PC-3 (cell line): ENCODE measurements at regions of chr3 and their contacts with region 1.

Region 1: GRCh38 chr3:32421991-32422859 is 30.6 kb downstream of the CMTM7 start:
- DNase-seq: peak; percentile 98
- ATAC-seq: peak; percentile 53
- H3K4me3 ChIP-seq: peak overlapping the region; percentile 53; the same call in 1 of the 2 replicates
- H3K27ac ChIP-seq: peak overlapping the region; percentile 99
- H3K4me1 ChIP-seq: peaks cover 62% of the 10 kb centered on the region
- H3K27me3 ChIP-seq: no peaks in the 10 kb centered on the region
- CTCF ChIP-seq: no peak

Region 2: DNA sequence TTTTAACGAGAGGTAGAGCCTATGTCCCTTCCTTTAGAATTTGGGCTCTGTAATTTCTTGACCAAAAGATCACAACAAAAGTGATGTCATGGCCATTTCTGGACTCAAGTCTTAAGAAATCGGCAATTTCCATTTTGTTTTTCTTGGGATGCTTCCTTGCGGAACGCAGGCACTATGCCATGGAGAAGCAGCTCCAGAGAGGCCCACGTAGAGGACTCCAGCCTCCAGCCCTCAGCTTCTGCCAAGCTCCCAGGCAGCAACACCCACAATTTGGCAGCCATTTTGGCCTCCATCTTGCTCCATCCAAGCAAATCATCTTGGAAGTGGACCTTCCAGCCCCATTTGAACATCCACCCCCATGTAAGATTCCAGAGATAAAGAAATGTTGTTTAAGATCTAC is 321.8 kb before region 1 on chr3:
- CTCF ChIA-PET with region 1: interaction called, 12 read pairs
- POLR2A ChIA-PET with region 1: no interaction called
- intact Hi-C with region 1: no loop called
- DNase-seq: no peak
- ATAC-seq: no peak
- H3K4me3 ChIP-seq: no peak overlapping the region
- H3K27ac ChIP-seq: no peak overlapping the region
- H3K4me1 ChIP-seq: peaks cover 13% of the 10 kb centered on the region
- H3K27me3 ChIP-seq: no peaks in the 10 kb centered on the region
- CTCF ChIP-seq: no peak

Region 3: GRCh38 chr3:32391643-32392535 is 30.3 kb before region 1 on chr3 and contains the start of gene CMTM7:
- CTCF ChIA-PET with region 1: no interaction called
- POLR2A ChIA-PET with region 1: no interaction called
- intact Hi-C with region 1: loop called (anchors 1 kb)
- DNase-seq: peak; percentile 89
- ATAC-seq: peak; percentile 83
- H3K4me3 ChIP-seq: peak within 1 kb of the TSS; percentile 99
- H3K27ac ChIP-seq: peak within 1 kb of the TSS; percentile 77
- H3K4me1 ChIP-seq: peaks cover 27% of the 10 kb centered on the region
- H3K27me3 ChIP-seq: no peaks in the 10 kb centered on the region
- CTCF ChIP-seq: no peak
- total RNA-seq, gene CMTM7: 37.1 and 71.0 TPM in 2 replicates

Region 4: DNA sequence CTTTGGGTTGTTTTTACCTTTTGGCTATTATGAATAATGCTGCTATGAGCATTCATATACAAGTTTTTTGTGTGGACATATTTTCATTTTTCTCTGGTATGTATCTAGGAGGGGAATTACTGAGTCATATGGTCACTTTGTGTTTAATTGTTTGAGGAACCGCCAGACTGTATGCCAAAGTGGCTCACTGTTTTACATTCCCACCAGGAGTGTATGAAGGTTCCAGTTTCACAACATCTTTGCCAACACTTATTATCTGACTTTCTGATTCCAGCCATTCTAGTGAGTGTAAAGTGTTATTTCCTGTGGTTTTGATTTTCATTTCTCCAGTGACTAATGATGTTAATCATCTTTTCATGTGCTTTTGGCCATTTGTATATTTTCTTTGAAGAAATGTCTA is 21.3 kb after region 1 on chr3:
- CTCF ChIA-PET with region 1: no interaction called
- POLR2A ChIA-PET with region 1: interaction called, 4 read pairs
- intact Hi-C with region 1: loop called (anchors 1 kb)
- DNase-seq: peak; percentile 81
- ATAC-seq: peak; percentile 91
- H3K4me3 ChIP-seq: no peak overlapping the region
- H3K27ac ChIP-seq: peak overlapping the region; percentile 58
- H3K4me1 ChIP-seq: peaks cover 14% of the 10 kb centered on the region
- H3K27me3 ChIP-seq: no peaks in the 10 kb centered on the region
- CTCF ChIP-seq: no peak

Region 5: GRCh38 chr3:32532434-32532833 is 110.2 kb after region 1 on chr3:
- CTCF ChIA-PET with region 1: no interaction called
- POLR2A ChIA-PET with region 1: no interaction called
- intact Hi-C with region 1: no loop called
- DNase-seq: no peak
- ATAC-seq: no peak
- H3K4me3 ChIP-seq: no peak overlapping the region
- H3K27ac ChIP-seq: no peak overlapping the region
- H3K4me1 ChIP-seq: no peaks in the 10 kb centered on the region
- H3K27me3 ChIP-seq: no peaks in the 10 kb centered on the region
- CTCF ChIP-seq: no peak